ENCODE measurements at regions of chr20 and their contacts with region 1.

Region 1: GRCh38 chr20:19995220-19995863 is 21.8 kb upstream of the NAA20 start:
- DNase-seq: peak in 22 of 42 donors; percentile 22 to 84 (median 60)

Region 2: GRCh38 chr20:19692685-19693119 is 302.6 kb before region 1 on chr20:
- intact Hi-C with region 1: loop called (anchors 5 kb)
- DNase-seq: peak; percentile 8 to 89 (median 72)

Region 3: DNA sequence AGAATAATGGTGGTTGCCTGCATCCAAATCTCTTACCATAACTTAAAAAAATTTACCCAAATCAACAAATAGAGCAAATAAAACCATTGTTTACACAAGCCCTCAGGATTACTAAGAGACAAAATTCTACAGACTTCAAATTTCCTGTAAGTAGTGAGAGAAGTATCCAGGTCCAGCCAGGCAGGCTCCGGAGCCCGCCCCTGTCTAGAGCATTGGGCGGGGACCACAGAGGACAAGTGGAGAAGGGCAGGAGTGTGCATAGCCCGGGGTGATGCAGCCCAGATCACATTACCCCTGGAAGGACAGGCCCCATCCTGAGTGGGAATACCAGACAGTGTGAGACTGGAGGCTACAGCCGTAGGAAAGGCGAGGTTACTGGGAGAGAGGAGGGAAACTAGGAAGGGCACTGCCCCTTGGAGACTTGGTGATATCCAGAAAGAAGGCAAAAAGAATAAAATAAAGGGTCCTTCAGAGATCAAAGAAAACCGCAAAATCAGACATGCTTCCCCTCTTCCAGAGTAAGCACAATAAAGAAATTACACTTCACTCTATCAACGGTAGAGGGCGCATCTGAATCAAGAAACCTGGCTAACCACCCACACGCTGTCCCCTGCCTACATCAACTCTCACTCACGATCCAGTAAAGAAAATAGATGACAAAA is 210.7 kb before region 1 on chr20:
- intact Hi-C with region 1: loop called (anchors 5 kb)
- DNase-seq: peak in 41 of 42 donors; percentile 26 to 89 (median 65)